Endothelial cell of umbilical vein (primary cell): ENCODE measurements at regions of chr9 and their contacts with region 1.

Region 1: DNA sequence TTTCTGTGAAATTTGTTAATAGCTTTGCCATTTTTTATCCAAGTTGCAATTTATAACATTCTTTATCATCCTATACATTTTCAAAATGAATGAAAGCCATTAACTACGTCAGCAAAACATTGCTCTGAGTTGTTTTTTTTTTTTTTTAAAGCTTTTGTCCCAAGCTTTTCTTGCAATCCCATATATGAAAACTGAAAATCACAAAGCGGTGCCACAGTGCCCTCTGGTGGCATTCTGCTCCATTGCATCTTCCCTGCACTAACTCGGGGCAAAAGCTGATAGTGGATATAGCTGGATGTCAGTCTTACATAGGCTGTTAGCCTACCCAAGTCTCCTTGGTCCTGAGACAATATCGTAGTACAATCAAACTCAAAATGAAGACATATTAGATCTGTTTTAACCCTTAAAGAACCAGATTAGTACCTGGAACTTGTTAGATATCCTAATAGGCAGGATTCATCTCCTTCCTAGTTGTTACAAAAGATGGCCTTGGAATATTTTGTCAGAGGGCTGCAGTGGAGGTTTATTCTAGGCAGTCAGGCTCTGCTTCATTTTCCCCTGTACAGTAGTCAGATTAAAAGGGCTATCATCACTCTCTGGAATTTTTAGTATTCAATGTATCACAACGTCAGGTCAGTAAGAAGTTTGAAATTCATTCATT is 669.9 kb downstream of the PTPRD start:
- DNase-seq: peak; percentile 87
- H3K4me3 ChIP-seq: no peak overlapping the region
- H3K27ac ChIP-seq: no peak overlapping the region
- H3K4me1 ChIP-seq: no peaks in the 10 kb centered on the region
- H3K27me3 ChIP-seq: no peaks in the 10 kb centered on the region
- CTCF ChIP-seq: peak; percentile 87 to 90
- POLR2A ChIP-seq: no peak

Region 2: DNA sequence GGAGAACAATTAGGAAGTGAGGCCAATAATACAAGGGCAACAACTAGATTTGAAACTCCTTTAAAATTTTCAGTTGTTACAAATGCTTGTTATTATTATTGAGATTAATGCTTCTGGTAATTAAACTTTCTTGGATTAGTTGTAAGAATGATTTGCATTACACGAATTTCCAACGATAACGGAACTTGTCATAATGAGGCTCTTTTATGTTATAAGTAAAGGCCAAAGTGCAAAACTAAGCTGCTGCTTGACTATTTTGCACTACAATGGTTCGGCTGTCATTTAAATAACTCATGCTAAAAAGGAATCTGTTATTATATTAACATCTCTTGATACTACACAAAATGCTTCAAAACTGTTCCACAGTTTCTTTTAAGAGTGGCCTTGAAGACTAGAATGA is 337.2 kb before region 1 on chr9:
- CTCF ChIA-PET with region 1: interaction called, 96 read pairs
- POLR2A ChIA-PET with region 1: no interaction called
- dilution Hi-C with region 1: no loop called
- intact Hi-C with region 1: loop called (anchors 1 kb)
- DNase-seq: no peak
- H3K4me3 ChIP-seq: no peak overlapping the region
- H3K27ac ChIP-seq: no peak overlapping the region
- H3K4me1 ChIP-seq: no peaks in the 10 kb centered on the region
- H3K27me3 ChIP-seq: peaks cover 0 to 2% of the 10 kb centered on the region in 2 experiments
- CTCF ChIP-seq: no peak
- POLR2A ChIP-seq: no peak

Region 3: GRCh38 chr9:9893822-9894221 is 49.1 kb before region 1 on chr9:
- CTCF ChIA-PET with region 1: interaction called, 10 read pairs
- POLR2A ChIA-PET with region 1: no interaction called
- dilution Hi-C with region 1: no loop called
- intact Hi-C with region 1: no loop called
- DNase-seq: peak; percentile 19
- H3K4me3 ChIP-seq: no peak overlapping the region
- H3K27ac ChIP-seq: no peak overlapping the region
- H3K4me1 ChIP-seq: no peaks in the 10 kb centered on the region
- H3K27me3 ChIP-seq: no peaks in the 10 kb centered on the region
- CTCF ChIP-seq: no peak
- POLR2A ChIP-seq: no peak

Region 4: GRCh38 chr9:9912459-9912858 is 30.4 kb before region 1 on chr9:
- CTCF ChIA-PET with region 1: interaction called, 44 read pairs
- POLR2A ChIA-PET with region 1: no interaction called
- dilution Hi-C with region 1: no loop called
- intact Hi-C with region 1: no loop called
- DNase-seq: peak; percentile 12
- H3K4me3 ChIP-seq: no peak overlapping the region
- H3K27ac ChIP-seq: no peak overlapping the region
- H3K4me1 ChIP-seq: no peaks in the 10 kb centered on the region
- H3K27me3 ChIP-seq: no peaks in the 10 kb centered on the region
- CTCF ChIP-seq: peak; percentile 18 to 28
- POLR2A ChIP-seq: no peak

Region 5: GRCh38 chr9:9998491-9999287 is 55.8 kb after region 1 on chr9:
- CTCF ChIA-PET with region 1: interaction called, 23 read pairs
- POLR2A ChIA-PET with region 1: no interaction called
- dilution Hi-C with region 1: no loop called
- intact Hi-C with region 1: no loop called
- DNase-seq: peak; percentile 86
- H3K4me3 ChIP-seq: peak overlapping the region in 1 of 3 experiments; percentile 30
- H3K27ac ChIP-seq: peak overlapping the region; percentile 68
- H3K4me1 ChIP-seq: peaks cover 36% of the 10 kb centered on the region
- H3K27me3 ChIP-seq: no peaks in the 10 kb centered on the region
- CTCF ChIP-seq: peak; percentile 55 to 56
- POLR2A ChIP-seq: peak; percentile 43

Region 6: GRCh38 chr9:10045598-10045997 is 102.7 kb after region 1 on chr9:
- CTCF ChIA-PET with region 1: interaction called, 14 read pairs
- POLR2A ChIA-PET with region 1: no interaction called
- dilution Hi-C with region 1: no loop called
- intact Hi-C with region 1: no loop called
- DNase-seq: peak; percentile 58
- H3K4me3 ChIP-seq: no peak overlapping the region
- H3K27ac ChIP-seq: no peak overlapping the region
- H3K4me1 ChIP-seq: no peaks in the 10 kb centered on the region
- H3K27me3 ChIP-seq: no peaks in the 10 kb centered on the region
- CTCF ChIP-seq: peak; percentile 11 to 42
- POLR2A ChIP-seq: no peak